SK-N-SH (cell line): ENCODE measurements at regions of chr7 and their contacts with region 1.

Region 1: DNA sequence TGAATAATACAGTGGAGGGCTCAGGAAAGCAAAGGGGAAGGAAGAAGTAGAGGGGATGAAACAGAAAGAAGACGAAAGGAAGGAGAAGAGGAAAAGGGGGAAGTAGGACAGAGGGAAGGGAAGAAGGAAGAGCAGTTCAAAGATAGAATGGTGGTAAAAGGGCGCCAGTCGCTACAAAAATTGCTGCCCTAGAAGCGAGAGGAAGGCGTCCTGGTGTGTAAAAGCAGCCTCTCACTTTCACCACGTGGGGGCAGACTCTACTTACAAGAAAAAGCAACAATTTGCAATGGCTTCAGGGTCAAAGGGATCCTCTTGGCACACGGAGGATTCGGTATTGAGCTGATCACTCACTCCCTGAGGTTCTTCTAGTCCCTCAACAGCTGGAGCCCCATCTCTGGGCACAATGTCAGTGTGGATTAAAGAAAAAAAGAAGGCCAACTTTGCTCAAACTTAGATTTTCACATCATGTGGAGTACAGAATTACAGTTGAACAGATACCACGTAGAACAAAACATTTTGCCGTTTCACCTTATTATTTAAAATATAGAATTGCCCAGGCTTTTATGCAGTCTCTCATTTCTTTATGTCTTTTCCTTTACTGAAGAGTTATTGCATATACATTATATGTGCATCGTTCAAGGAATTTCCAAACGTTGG is 31.4 kb upstream of the NPVF start:
- DNase-seq: peak; percentile 79
- H3K4me3 ChIP-seq: peak overlapping the region in 1 of 2 experiments; percentile 15; a peak in 1 of 4 replicates
- H3K27ac ChIP-seq: no peak overlapping the region
- H3K4me1 ChIP-seq: peaks cover 0 to 4% of the 10 kb centered on the region in 2 experiments; a peak in 2 of 4 replicates
- H3K27me3 ChIP-seq: peaks cover 10% of the 10 kb centered on the region; the same call in 1 of the 2 replicates
- CTCF ChIP-seq: peak; percentile 94
- EP300 ChIP-seq: no peak
- RAD21 ChIP-seq: peak; percentile 99

Region 2: DNA sequence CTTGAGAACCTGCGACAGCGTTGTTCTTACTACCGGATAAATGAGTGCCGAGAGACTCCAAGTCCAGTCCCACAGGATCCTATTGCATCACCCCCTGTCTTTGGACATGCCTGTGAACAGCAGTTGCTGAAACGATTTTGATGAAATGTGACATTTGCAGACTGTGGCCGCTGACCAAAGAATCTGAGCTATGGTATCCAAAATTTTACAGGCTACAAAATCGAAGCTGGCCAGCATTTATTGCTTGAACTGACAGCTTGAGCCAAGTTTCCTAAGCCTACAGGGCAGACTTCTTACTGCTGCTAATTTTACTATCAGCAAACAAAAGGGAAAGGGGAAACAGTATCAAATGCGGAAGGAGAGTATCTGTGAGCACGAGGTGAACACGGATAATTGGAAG is 19.4 kb before region 1 on chr7:
- CTCF ChIA-PET with region 1: interaction called, 10 read pairs
- POLR2A ChIA-PET with region 1: no interaction called
- DNase-seq: no peak
- H3K4me3 ChIP-seq: no peak overlapping the region
- H3K27ac ChIP-seq: no peak overlapping the region
- H3K4me1 ChIP-seq: no peaks in the 10 kb centered on the region
- H3K27me3 ChIP-seq: no peaks in the 10 kb centered on the region; the same call in 1 of the 2 replicates
- CTCF ChIP-seq: no peak
- EP300 ChIP-seq: no peak
- RAD21 ChIP-seq: no peak

Region 3: GRCh38 chr7:25288556-25289307 is 29.0 kb after region 1 on chr7:
- CTCF ChIA-PET with region 1: interaction called, 11 read pairs
- POLR2A ChIA-PET with region 1: no interaction called
- DNase-seq: no peak
- H3K4me3 ChIP-seq: no peak overlapping the region
- H3K27ac ChIP-seq: no peak overlapping the region
- H3K4me1 ChIP-seq: no peaks in the 10 kb centered on the region
- H3K27me3 ChIP-seq: no peaks in the 10 kb centered on the region
- CTCF ChIP-seq: no peak
- EP300 ChIP-seq: no peak
- RAD21 ChIP-seq: no peak

Region 4: GRCh38 chr7:25375805-25376600 is 116.3 kb after region 1 on chr7:
- CTCF ChIA-PET with region 1: interaction called, 526 read pairs
- POLR2A ChIA-PET with region 1: no interaction called
- DNase-seq: no peak
- H3K4me3 ChIP-seq: no peak overlapping the region
- H3K27ac ChIP-seq: no peak overlapping the region
- H3K4me1 ChIP-seq: no peaks in the 10 kb centered on the region
- H3K27me3 ChIP-seq: no peaks in the 10 kb centered on the region
- CTCF ChIP-seq: no peak
- EP300 ChIP-seq: no peak
- RAD21 ChIP-seq: no peak

Region 5: GRCh38 chr7:25469669-25470068 is 210.0 kb after region 1 on chr7:
- CTCF ChIA-PET with region 1: no interaction called
- POLR2A ChIA-PET with region 1: no interaction called
- DNase-seq: no peak
- H3K4me3 ChIP-seq: no peak overlapping the region
- H3K27ac ChIP-seq: no peak overlapping the region
- H3K4me1 ChIP-seq: no peaks in the 10 kb centered on the region
- H3K27me3 ChIP-seq: no peaks in the 10 kb centered on the region
- CTCF ChIP-seq: no peak
- EP300 ChIP-seq: no peak
- RAD21 ChIP-seq: no peak

Region 6: DNA sequence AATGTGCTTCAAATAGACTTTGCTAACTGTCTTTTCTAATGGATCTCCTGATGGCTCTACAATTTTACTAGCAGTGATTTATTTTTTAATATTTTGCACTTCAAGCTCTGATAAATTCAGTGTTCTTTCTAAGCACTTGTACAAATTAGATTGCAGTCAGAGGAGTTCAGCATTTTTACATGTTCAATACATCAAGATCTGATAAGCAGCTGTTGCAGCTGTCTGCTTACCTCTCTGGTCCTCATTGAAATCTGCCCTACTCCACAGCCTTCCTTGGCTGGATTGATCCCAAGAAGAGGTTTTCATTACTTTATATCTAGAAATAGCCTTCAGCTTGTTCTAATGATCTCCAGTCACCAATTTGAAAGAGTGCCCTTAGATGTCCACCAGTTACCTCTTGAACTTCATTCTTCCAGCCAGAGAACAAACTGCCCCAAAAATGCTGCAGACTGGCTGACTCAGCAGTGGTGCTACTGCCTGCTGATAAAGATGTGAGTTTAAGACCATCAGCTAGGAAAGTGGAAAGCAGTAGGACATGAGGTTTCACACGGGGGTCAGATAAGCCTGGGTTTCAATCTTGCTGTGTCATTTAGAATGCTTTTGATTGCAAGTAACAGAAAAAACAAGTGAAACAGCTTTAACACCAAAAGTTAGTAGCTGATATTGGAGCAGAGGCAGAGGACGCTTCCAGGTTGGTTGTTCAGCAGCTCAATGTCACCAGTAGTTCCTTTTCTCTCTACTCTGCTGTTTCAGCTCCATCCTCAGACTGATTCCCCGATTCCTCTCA is 319.5 kb after region 1 on chr7:
- CTCF ChIA-PET with region 1: interaction called, 261 read pairs
- POLR2A ChIA-PET with region 1: no interaction called
- DNase-seq: no peak
- H3K4me3 ChIP-seq: no peak overlapping the region
- H3K27ac ChIP-seq: no peak overlapping the region
- H3K4me1 ChIP-seq: peaks cover 0 to 8% of the 10 kb centered on the region in 2 experiments; a peak in 2 of 4 replicates
- H3K27me3 ChIP-seq: no peaks in the 10 kb centered on the region
- CTCF ChIP-seq: no peak
- EP300 ChIP-seq: no peak
- RAD21 ChIP-seq: no peak